Naive thymus-derived CD4-positive, alpha-beta T cell (primary cell): ENCODE measurements at regions of chr11 and their contacts with region 1.

Region 1: GRCh38 chr11:3723014-3723708 is 52.0 kb upstream of the CHRNA10 start:
- DNase-seq: no peak
- ATAC-seq: peak; percentile 68
- H3K4me3 ChIP-seq: no peak overlapping the region
- H3K4me3 Mint-ChIP-seq: no peak overlapping the region
- H3K27ac ChIP-seq: no peak overlapping the region
- H3K27ac Mint-ChIP-seq: peak overlapping the region in 2 of 9 donors; percentile 11 to 25
- H3K4me1 ChIP-seq: no peaks in the 10 kb centered on the region
- H3K4me1 Mint-ChIP-seq: peaks cover 0 to 8% (median 2%) of the 10 kb centered on the region in 7 donors
- H3K27me3 ChIP-seq: no peaks in the 10 kb centered on the region
- H3K27me3 Mint-ChIP-seq: no peaks in the 10 kb centered on the region

Region 2: DNA sequence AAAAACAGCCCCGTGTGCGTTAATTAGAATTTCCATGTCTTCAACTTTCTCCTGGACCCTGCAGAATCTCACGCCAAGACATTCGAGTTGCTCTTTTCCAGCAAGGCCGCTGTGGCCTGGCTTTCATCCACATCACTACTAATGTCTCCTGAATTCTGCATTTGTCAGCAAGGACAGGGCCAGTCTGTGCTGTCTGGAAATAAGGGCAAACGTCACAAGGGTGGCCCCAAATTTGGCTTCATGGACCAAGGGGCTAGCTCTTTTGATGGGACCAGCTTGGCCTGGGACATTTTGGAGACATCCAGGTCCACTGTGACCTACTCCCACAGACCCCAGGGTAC is 1056.8 kb before region 1 on chr11:
- CTCF ChIA-PET with region 1: no interaction called
- POLR2A ChIA-PET with region 1: no interaction called
- intact Hi-C with region 1: no loop called
- DNase-seq: no peak
- ATAC-seq: no peak
- H3K4me3 ChIP-seq: no peak overlapping the region
- H3K4me3 Mint-ChIP-seq: no peak overlapping the region
- H3K27ac ChIP-seq: no peak overlapping the region
- H3K27ac Mint-ChIP-seq: no peak overlapping the region
- H3K4me1 ChIP-seq: no peaks in the 10 kb centered on the region
- H3K4me1 Mint-ChIP-seq: peaks cover 0 to 6% (median 2%) of the 10 kb centered on the region in 7 donors
- H3K27me3 ChIP-seq: no peaks in the 10 kb centered on the region
- H3K27me3 Mint-ChIP-seq: no peaks in the 10 kb centered on the region

Region 3: GRCh38 chr11:3685923-3686322 is 37.2 kb before region 1 on chr11:
- CTCF ChIA-PET with region 1: no interaction called
- POLR2A ChIA-PET with region 1: no interaction called
- intact Hi-C with region 1: loop called in 1 of 2 experiments (anchors 5 kb)
- DNase-seq: no peak
- ATAC-seq: no peak
- H3K4me3 ChIP-seq: no peak overlapping the region
- H3K4me3 Mint-ChIP-seq: no peak overlapping the region
- H3K27ac ChIP-seq: no peak overlapping the region
- H3K27ac Mint-ChIP-seq: no peak overlapping the region
- H3K4me1 ChIP-seq: peaks cover 0 to 4% of the 10 kb centered on the region in 2 donors
- H3K4me1 Mint-ChIP-seq: peaks cover under 1 to 15% (median 8%) of the 10 kb centered on the region in 7 donors
- H3K27me3 ChIP-seq: no peaks in the 10 kb centered on the region
- H3K27me3 Mint-ChIP-seq: no peaks in the 10 kb centered on the region

Region 4: GRCh38 chr11:3767536-3767935 is 44.4 kb after region 1 on chr11:
- CTCF ChIA-PET with region 1: no interaction called
- POLR2A ChIA-PET with region 1: no interaction called
- intact Hi-C with region 1: loop called in 1 of 2 experiments (anchors 5 kb)
- DNase-seq: no peak
- ATAC-seq: no peak
- H3K4me3 ChIP-seq: no peak overlapping the region
- H3K4me3 Mint-ChIP-seq: no peak overlapping the region
- H3K27ac ChIP-seq: no peak overlapping the region
- H3K27ac Mint-ChIP-seq: peak overlapping the region in 1 of 9 donors; percentile 31
- H3K4me1 ChIP-seq: no peaks in the 10 kb centered on the region
- H3K4me1 Mint-ChIP-seq: peaks cover 0 to 4% (median 0%) of the 10 kb centered on the region in 7 donors
- H3K27me3 ChIP-seq: no peaks in the 10 kb centered on the region
- H3K27me3 Mint-ChIP-seq: no peaks in the 10 kb centered on the region